GM12878 (cell line): ENCODE measurements at regions of chr4 and their contacts with region 1.

Region 1: DNA sequence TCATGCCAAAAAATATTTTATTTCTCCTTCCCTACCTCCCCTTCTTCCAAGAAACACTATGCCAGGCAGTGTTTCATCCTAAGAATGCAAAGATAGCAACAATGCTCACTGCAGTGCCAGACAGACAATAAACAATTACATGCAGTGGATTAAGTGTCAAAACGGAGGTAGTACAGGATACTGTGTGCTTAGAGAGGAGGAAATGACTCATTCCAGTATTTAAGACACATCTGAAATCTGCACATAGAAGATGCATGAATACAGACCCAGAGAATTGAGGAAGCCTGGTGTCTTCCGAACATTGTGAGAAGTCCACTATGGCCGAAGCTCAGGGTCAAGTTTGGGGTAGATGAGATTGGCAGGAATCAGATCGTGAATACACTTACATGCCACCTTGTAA is 326.4 kb downstream of the PPP3CA start:
- DNase-seq: peak; percentile 53
- ATAC-seq: peak; percentile 72
- H3K4me3 ChIP-seq: 0 out of 2 replicates have a peak overlapping the region, but pooled peaks have one; percentile 5
- H3K27ac ChIP-seq: no peak overlapping the region
- H3K4me1 ChIP-seq: peaks cover 49% of the 10 kb centered on the region
- H3K27me3 ChIP-seq: no peaks in the 10 kb centered on the region
- CTCF ChIP-seq: no peak
- EP300 ChIP-seq: peak in 1 of 2 experiments; percentile 31; a peak in 1 of 4 replicates
- POLR2A ChIP-seq: no peak
- RAD21 ChIP-seq: no peak

Region 2: DNA sequence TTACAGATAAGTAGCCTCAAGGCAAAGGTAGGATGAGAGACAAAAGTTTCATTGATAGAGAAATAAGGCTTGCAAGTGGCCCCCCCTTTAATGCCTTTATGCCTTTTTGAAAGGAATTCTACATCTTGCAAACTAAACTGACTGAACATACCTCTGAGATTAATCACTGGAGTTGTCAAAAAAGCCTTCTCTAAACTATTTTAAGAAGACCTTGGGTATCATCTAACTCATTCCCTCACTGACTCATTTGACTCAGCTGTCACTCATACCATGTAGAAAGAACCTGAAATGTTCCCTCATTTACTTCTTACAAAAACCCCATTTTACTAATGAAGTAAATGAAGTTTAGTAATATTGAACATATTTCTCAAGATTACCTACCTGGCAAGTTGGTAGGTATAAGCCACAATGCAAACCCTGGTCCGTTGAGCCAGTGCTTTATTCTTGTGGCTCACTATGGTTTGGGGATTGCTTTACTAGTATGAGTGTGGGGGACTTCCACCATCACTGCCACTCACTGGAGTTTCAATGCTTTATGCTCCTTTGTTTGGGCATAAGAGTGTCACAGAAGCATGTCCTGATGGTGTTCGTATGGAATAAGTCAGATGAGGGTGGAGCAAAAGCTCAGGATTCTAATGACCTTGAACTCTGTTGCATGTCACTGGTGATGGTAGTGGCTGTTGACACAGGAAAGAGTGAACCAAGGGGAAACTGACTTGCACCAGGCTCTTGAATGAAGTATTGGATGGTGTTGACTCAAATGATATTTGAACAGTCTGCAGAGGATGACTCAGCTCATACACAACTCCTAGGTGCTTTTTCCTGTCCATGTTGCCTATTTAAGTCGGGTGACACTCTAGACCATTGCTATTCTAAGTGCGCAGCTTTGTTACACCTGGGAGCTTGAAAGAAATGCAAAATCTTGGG is 197.6 kb before region 1 on chr4:
- CTCF ChIA-PET with region 1: no interaction called
- POLR2A ChIA-PET with region 1: interaction called, 4 read pairs
- RAD21 ChIA-PET with region 1: interaction called, 5 read pairs
- SMC1A ChIA-PET with region 1: interaction called, 10 read pairs
- in situ Hi-C with region 1: loop called (anchors 10 kb)
- intact Hi-C with region 1: no loop called
- DNase-seq: peak; percentile 68
- ATAC-seq: peak; percentile 80
- H3K4me3 ChIP-seq: no peak overlapping the region
- H3K27ac ChIP-seq: peak overlapping the region; percentile 51
- H3K4me1 ChIP-seq: peaks cover 18% of the 10 kb centered on the region
- H3K27me3 ChIP-seq: no peaks in the 10 kb centered on the region
- CTCF ChIP-seq: no peak
- EP300 ChIP-seq: peak in 1 of 2 experiments; percentile 45; a peak in 2 of 4 replicates
- POLR2A ChIP-seq: no peak
- RAD21 ChIP-seq: no peak

Region 3: GRCh38 chr4:100843910-100844309 is 177.0 kb before region 1 on chr4:
- CTCF ChIA-PET with region 1: no interaction called
- POLR2A ChIA-PET with region 1: no interaction called
- RAD21 ChIA-PET with region 1: no interaction called
- SMC1A ChIA-PET with region 1: no interaction called
- in situ Hi-C with region 1: no loop called
- intact Hi-C with region 1: no loop called
- DNase-seq: no peak
- ATAC-seq: peak; percentile 55
- H3K4me3 ChIP-seq: no peak overlapping the region
- H3K27ac ChIP-seq: no peak overlapping the region
- H3K4me1 ChIP-seq: no peaks in the 10 kb centered on the region
- H3K27me3 ChIP-seq: no peaks in the 10 kb centered on the region
- CTCF ChIP-seq: no peak
- EP300 ChIP-seq: no peak
- POLR2A ChIP-seq: no peak
- RAD21 ChIP-seq: no peak

Region 4: GRCh38 chr4:101086801-101087586 is 66.0 kb after region 1 on chr4:
- CTCF ChIA-PET with region 1: no interaction called
- POLR2A ChIA-PET with region 1: no interaction called
- RAD21 ChIA-PET with region 1: no interaction called
- SMC1A ChIA-PET with region 1: no interaction called
- in situ Hi-C with region 1: no loop called
- intact Hi-C with region 1: no loop called
- DNase-seq: no peak
- ATAC-seq: peak; percentile 26; the same call in 2 of the 3 replicates
- H3K4me3 ChIP-seq: no peak overlapping the region
- H3K27ac ChIP-seq: no peak overlapping the region
- H3K4me1 ChIP-seq: peaks cover 14% of the 10 kb centered on the region
- H3K27me3 ChIP-seq: no peaks in the 10 kb centered on the region
- CTCF ChIP-seq: peak in 2 of 3 experiments; percentile 8 to 16; a peak in 1 of 6 replicates
- EP300 ChIP-seq: no peak
- POLR2A ChIP-seq: no peak
- RAD21 ChIP-seq: no peak

Region 5: GRCh38 chr4:101135371-101136010 is 114.5 kb after region 1 on chr4:
- CTCF ChIA-PET with region 1: no interaction called
- POLR2A ChIA-PET with region 1: interaction called, 3 read pairs
- RAD21 ChIA-PET with region 1: interaction called, 9 read pairs
- SMC1A ChIA-PET with region 1: interaction called, 3 read pairs
- in situ Hi-C with region 1: no loop called
- intact Hi-C with region 1: loop called (anchors 5 kb)
- DNase-seq: no peak
- ATAC-seq: peak; percentile 80
- H3K4me3 ChIP-seq: 0 out of 2 replicates have a peak overlapping the region, but pooled peaks have one; percentile 39
- H3K27ac ChIP-seq: no peak overlapping the region; the same call in 1 of the 2 replicates
- H3K4me1 ChIP-seq: peaks cover 10% of the 10 kb centered on the region; the same call in 1 of the 2 replicates
- H3K27me3 ChIP-seq: no peaks in the 10 kb centered on the region
- CTCF ChIP-seq: no peak
- EP300 ChIP-seq: peak in 1 of 2 experiments; percentile 27; a peak in 1 of 4 replicates
- POLR2A ChIP-seq: no peak
- RAD21 ChIP-seq: no peak

Region 6: DNA sequence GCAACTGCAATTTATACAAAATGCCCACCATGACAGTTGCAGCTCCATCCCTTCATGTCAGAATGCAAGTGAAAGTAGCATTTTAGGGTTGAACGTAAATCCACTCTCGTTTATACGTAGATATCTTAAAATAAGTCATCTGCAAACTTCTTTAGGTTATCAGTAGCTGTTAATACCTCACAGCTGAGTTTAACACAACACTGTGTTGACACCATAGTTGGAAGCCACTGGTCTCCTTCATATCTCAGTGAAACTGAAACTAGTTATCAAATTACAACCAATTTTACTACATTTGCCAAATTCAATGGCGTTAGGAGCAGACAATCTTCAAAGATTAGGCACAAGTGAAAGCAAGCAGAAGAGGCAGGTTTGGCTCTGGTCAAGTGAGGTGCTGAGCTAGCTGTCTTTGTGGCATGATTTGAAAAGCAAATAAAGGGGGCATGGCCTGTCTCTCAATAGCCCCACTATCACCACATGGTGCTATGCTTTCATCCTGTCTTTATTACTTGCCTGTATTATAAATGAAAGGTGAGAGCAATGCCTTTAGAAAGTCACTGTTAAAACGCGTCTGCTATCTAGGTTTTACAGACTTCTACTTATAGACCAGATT is 314.1 kb after region 1 on chr4:
- CTCF ChIA-PET with region 1: no interaction called
- POLR2A ChIA-PET with region 1: no interaction called
- RAD21 ChIA-PET with region 1: no interaction called
- SMC1A ChIA-PET with region 1: no interaction called
- in situ Hi-C with region 1: loop called (anchors 10 kb)
- intact Hi-C with region 1: no loop called
- DNase-seq: no peak
- ATAC-seq: peak; percentile 85
- H3K4me3 ChIP-seq: no peak overlapping the region
- H3K27ac ChIP-seq: no peak overlapping the region
- H3K4me1 ChIP-seq: peaks cover 6% of the 10 kb centered on the region
- H3K27me3 ChIP-seq: no peaks in the 10 kb centered on the region
- CTCF ChIP-seq: no peak
- EP300 ChIP-seq: no peak
- POLR2A ChIP-seq: no peak
- RAD21 ChIP-seq: no peak